HAP-1 (cell line): ENCODE measurements at regions of chr14 and their contacts with region 1.

Region 1: DNA sequence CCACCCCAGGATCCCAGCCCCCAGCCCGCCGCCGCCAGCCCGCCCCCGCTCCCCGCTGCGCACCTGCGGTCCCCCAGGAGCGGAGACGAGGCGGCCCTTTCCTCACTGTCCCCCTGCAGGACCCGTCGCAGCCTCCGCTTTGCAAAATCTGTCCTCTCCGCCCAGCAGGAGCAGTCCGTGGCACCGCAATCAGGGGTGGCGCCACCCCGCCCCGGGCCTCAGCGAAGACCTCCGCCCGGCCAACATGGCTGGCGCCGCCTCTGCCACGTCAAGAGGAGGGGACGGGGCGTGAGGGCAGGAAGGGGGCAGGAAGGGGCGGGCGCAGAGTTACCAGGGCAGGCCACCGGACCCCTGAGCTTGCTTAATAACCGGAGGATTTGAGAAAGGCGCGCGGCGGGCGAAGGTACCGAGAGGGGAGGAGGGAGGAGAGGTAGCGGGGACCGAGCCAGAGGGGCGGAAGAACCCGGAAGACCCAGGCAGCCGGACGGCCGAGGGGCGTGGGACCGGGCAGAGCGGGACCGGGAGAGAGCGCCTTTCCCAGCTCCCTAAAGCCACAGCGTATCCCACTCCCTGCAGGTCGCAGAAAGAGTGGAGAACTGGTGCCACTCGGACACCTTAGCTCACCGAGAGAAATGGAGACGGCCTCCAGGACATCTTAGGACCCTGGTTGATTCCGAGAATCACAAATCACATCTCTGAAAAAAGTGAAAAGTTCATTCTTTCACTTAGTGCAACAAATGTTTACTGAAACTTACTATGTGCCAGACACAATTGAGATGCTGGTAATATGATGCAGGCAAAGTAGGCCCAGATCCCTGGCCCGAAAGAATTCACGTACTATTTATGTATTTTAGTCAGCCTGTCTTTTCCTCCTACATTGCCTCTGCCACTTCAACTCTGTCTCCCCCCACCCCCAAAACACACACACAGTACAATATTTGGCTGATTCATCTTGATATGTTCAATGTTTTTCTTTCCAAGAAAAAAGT is at the start of gene SEC23A:
- DNase-seq: peak; percentile 92 to 96
- H3K4me3 ChIP-seq: peak within 1 kb of the TSS; percentile 59
- H3K4me1 ChIP-seq: peaks cover 16% of the 10 kb centered on the region
- H3K27me3 ChIP-seq: no peaks in the 10 kb centered on the region

Region 2: GRCh38 chr14:38964630-38965029 is 138.6 kb before region 1 on chr14:
- in situ Hi-C with region 1: no loop called
- DNase-seq: no peak
- H3K4me3 ChIP-seq: no peak overlapping the region
- H3K4me1 ChIP-seq: no peaks in the 10 kb centered on the region
- H3K27me3 ChIP-seq: no peaks in the 10 kb centered on the region

Region 3: GRCh38 chr14:39174560-39175444 is 71.5 kb after region 1 on chr14 and contains the start of gene PNN:
- in situ Hi-C with region 1: loop called (anchors 5 kb)
- DNase-seq: peak; percentile 97 to 99
- H3K4me3 ChIP-seq: peak within 1 kb of the TSS; percentile 93
- H3K4me1 ChIP-seq: peaks cover 22% of the 10 kb centered on the region
- H3K27me3 ChIP-seq: no peaks in the 10 kb centered on the region

Region 4: DNA sequence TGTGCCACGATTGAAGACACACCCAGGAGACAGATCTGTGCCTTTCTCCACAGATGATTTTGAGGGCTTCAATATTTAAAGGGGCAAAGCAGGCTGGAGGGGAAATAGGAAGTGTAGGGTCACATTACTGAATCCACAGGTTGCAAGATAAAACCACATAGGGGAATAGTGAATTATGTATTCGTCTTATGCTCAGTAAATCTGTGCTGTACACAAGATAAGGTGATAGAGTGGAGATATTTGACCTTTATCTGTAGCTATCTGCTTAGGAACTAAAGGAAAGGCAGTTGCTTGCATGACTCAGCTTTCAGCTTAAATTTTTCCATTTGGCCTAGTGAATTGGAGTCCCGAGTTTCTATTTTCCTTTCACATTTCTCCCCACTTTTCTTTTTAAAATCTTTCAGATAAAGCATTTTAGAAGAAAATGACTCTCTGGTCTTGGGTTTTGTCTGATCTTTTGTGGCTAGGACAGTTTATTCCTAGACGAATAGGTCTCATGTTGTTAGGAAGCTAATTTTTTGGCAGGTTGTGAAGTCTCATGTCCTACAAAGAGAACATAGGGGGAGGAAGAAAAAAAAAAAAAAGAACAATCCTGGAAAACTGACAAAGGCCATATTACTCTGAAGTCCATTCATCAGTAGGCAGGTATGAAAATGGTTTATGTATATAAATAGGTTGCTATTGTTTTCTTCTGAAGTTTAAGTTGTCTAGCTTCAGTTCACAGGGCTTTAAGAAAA is 273.6 kb after region 1 on chr14:
- in situ Hi-C with region 1: loop called (anchors 10 kb)
- DNase-seq: no peak
- H3K4me3 ChIP-seq: no peak overlapping the region
- H3K4me1 ChIP-seq: peaks cover 7% of the 10 kb centered on the region
- H3K27me3 ChIP-seq: no peaks in the 10 kb centered on the region